Activated CD8-positive, alpha-beta T cell treated with anti-CD3 and anti-CD28 coated beads, Interleukin-2, amount 10 ng/mL, durations not matched to agents 7 days and 5 days (primary cell): ENCODE measurements at regions of chr6 and their contacts with region 1.

Region 1: GRCh38 chr6:15441215-15441868 is 195.5 kb downstream of the JARID2 start:
- DNase-seq: peak; percentile 53
- ATAC-seq: no peak
- H3K4me3 Mint-ChIP-seq: no peak overlapping the region
- H3K27ac Mint-ChIP-seq: no peak overlapping the region
- H3K4me1 Mint-ChIP-seq: peaks cover 74% of the 10 kb centered on the region
- H3K27me3 Mint-ChIP-seq: no peaks in the 10 kb centered on the region

Region 2: DNA sequence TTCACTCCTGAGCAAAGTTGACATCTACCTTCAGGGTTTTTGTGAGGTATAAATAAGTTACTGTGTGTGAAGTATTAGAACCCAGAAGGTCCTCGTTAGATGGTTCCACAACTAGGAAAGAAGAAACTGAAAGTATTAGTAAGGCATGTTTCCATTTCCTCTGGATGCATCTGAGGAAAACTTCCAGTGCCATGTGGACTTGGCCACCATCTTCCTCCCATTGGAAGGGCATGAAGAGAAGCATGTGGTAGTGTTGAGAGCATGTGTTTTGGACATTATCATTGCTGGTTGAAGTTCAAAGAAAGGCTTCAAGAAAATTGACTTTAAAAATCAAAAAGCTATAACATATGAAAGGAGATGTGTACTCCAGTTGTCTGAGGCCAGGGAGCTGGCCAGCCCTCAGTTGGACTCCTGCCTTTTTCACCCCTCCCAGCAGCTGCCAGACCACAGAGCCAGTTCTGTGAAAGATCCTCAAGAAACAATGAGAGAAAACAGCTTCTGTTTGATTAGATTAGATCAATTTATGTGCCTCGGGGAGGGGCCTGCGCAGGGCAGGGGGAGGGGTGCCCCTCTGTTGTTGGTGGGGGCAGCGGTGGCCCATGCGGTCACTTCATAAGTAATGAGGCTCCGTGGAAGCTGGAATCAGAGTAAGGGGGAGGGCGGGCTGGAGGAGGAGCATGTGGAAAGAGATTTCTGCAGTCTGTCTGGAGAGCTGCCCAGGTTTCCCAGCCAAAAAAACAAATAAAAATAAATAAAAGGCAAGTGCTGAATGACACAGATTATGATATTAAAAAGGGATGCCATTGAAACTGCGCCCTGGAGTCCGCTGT is 41.5 kb before region 1 on chr6:
- CTCF ChIA-PET with region 1: interaction called, 13 read pairs
- POLR2A ChIA-PET with region 1: interaction called, 9 read pairs
- DNase-seq: no peak
- ATAC-seq: no peak
- H3K4me3 Mint-ChIP-seq: peak overlapping the region; percentile 70
- H3K27ac Mint-ChIP-seq: peak overlapping the region; percentile 91
- H3K4me1 Mint-ChIP-seq: peaks cover 78% of the 10 kb centered on the region
- H3K27me3 Mint-ChIP-seq: no peaks in the 10 kb centered on the region

Region 3: DNA sequence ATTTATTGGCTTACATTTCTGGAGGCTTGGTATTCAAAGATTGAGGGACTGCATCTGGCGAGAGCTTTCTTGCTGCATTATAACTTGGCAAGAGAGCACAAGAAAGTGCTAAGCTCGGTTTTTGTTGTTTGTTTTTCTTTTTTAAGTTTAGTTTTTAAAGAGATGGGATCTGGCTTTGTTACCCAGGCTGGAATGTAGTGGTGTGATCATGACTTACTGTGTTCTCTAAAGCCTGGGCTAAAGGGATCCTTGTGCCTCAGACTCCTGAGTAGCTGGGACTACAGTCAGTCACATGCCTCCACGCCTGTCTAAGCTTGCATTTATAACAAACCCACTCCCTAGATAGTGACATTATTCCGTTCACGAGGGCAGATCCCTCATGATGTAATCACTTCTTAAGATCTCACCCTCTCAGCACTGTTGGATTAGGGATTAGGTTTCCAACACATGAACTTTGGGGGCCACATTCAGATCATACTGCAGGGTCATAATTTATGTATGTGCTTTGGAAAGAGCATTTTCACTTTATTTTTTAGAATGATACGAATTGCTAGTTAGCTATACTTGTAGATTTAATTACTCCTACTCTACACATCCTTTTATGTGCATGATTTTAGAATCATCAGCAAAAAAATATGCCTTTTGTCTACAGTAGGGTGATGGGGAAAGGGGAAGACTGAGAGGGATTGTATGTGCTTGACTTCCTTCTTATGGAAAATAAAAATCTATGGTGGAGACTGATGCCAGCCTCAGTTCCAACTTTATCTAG is 27.7 kb before region 1 on chr6:
- CTCF ChIA-PET with region 1: interaction called, 11 read pairs
- POLR2A ChIA-PET with region 1: interaction called, 3 read pairs
- DNase-seq: no peak
- ATAC-seq: no peak
- H3K4me3 Mint-ChIP-seq: no peak overlapping the region
- H3K27ac Mint-ChIP-seq: peak overlapping the region; percentile 19
- H3K4me1 Mint-ChIP-seq: peaks cover 71% of the 10 kb centered on the region
- H3K27me3 Mint-ChIP-seq: no peaks in the 10 kb centered on the region

Region 4: GRCh38 chr6:15539722-15540270 is 98.5 kb after region 1 on chr6:
- CTCF ChIA-PET with region 1: no interaction called
- POLR2A ChIA-PET with region 1: no interaction called
- DNase-seq: no peak
- ATAC-seq: no peak
- H3K4me3 Mint-ChIP-seq: no peak overlapping the region
- H3K27ac Mint-ChIP-seq: no peak overlapping the region
- H3K4me1 Mint-ChIP-seq: no peaks in the 10 kb centered on the region
- H3K27me3 Mint-ChIP-seq: no peaks in the 10 kb centered on the region